ENCODE measurements at regions of chr20 and their contacts with region 1.

Region 1: DNA sequence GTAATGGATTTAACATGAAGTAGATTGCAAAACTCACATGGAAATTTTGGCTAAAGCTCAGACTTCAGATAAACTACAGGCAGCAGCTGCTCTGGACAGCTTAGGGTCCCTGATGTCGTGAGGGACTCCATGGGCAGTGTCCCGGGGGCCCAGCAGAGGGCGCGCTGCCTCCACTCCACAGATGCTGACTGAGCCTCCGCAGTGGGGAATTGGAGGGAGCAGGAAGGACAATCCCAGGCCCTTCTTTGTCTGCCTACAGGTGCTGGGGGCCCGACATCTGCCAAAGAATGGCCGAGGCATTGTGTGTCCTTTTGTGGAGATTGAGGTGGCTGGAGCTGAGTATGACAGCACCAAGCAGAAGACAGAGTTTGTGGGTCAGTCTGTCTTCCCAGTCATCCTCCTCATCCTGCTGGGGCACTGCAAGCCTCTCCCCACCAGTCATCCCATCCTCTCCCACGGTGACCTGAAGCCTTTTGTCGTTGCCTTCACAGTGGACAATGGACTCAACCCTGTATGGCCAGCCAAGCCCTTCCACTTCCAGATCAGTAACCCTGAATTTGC is 35.9 kb downstream of the PLCG1 start:
- DNase-seq: peak; percentile 60 to 81
- ATAC-seq: peak; percentile 89 to 95
- H3K4me3 ChIP-seq: no peak overlapping the region
- H3K27ac ChIP-seq: no peak overlapping the region
- H3K4me1 ChIP-seq: peaks cover 11% of the 10 kb centered on the region; the same call in 2 of the 3 replicates
- CTCF ChIP-seq: peak; percentile 85
- EP300 ChIP-seq: no peak
- POLR2A ChIP-seq: no peak
- RAD21 ChIP-seq: peak; percentile 89 to 93

Region 2: GRCh38 chr20:40931410-40932044 is 241.7 kb before region 1 on chr20:
- CTCF ChIA-PET with region 1: no interaction called
- POLR2A ChIA-PET with region 1: no interaction called
- DNase-seq: no peak
- ATAC-seq: no peak
- H3K4me3 ChIP-seq: no peak overlapping the region
- H3K27ac ChIP-seq: no peak overlapping the region
- H3K4me1 ChIP-seq: no peaks in the 10 kb centered on the region
- CTCF ChIP-seq: no peak
- EP300 ChIP-seq: no peak
- POLR2A ChIP-seq: no peak
- RAD21 ChIP-seq: no peak

Region 3: DNA sequence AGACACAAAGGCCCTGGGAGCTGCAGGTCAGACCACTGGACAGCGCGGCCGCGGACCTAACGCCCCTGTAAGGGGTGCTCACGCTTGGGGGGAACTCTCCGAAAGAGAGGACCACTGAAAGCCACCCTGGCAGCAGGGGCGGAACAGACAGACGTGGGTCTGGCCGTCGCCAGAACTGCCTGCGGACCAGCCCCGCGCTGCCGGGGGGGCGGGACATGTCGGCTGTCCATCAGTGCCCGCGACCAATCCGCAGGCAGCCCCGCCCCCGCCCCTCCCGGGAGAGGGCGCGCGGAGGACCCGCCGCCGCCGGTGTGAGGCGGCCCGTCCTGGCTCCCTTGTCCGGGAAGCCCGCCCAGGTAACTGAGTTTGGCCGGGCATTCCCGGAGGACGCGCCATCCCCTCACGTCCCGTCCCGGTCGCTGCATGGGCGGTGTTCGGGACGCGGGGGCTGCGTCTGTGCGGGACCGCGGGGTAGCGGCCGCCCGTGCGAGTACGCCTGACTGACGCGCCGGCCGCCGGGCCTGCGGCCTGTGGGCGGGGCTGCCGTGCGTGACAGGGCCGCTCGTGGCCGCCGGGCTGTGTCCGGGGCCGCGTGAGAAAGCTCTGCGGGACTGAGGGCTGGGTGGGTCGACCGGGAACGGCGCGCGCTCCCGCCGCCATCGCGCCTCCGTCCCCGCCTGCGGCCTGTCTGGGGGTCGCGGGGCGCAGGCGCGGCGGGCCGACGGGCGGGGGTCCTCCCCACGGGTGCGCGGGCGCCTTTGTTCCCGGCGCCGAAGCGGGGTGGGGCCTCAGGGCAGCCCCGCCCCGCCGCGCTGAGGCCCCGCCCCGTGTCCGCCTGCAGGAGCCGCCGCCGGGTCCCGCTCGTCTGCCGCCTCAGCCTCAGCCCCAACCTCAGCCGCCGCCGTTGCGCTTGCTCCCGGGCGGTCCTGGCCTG is 36.3 kb before region 1 on chr20 and contains the start of gene PLCG1:
- CTCF ChIA-PET with region 1: interaction called, 16 read pairs
- POLR2A ChIA-PET with region 1: interaction called, 3 read pairs
- DNase-seq: peak; percentile 83 to 91
- ATAC-seq: peak; percentile 77 to 86
- H3K4me3 ChIP-seq: peak within 1 kb of the TSS; percentile 89
- H3K27ac ChIP-seq: peak within 1 kb of the TSS; percentile 86 to 91
- H3K4me1 ChIP-seq: peaks cover 7% of the 10 kb centered on the region
- CTCF ChIP-seq: no peak
- EP300 ChIP-seq: no peak
- POLR2A ChIP-seq: peak; percentile 57
- RAD21 ChIP-seq: no peak
- polyA plus RNA-seq, gene PLCG1: 22.0 and 37.1 TPM in 2 replicates

Region 4: GRCh38 chr20:41161886-41162285 is 11.4 kb before region 1 on chr20:
- CTCF ChIA-PET with region 1: interaction called, 43 read pairs
- POLR2A ChIA-PET with region 1: no interaction called
- DNase-seq: no peak
- ATAC-seq: 0 out of 6 replicates have a peak, but pooled peaks of 1 of the 2 experiments have one; percentile 28
- H3K4me3 ChIP-seq: no peak overlapping the region
- H3K27ac ChIP-seq: no peak overlapping the region
- H3K4me1 ChIP-seq: no peaks in the 10 kb centered on the region
- CTCF ChIP-seq: no peak
- EP300 ChIP-seq: no peak
- POLR2A ChIP-seq: no peak
- RAD21 ChIP-seq: no peak

Region 5: GRCh38 chr20:41205313-41205712 is 32.1 kb after region 1 on chr20:
- CTCF ChIA-PET with region 1: interaction called, 16 read pairs
- POLR2A ChIA-PET with region 1: no interaction called
- DNase-seq: no peak
- ATAC-seq: no peak
- H3K4me3 ChIP-seq: no peak overlapping the region
- H3K27ac ChIP-seq: no peak overlapping the region
- H3K4me1 ChIP-seq: no peaks in the 10 kb centered on the region
- CTCF ChIP-seq: no peak
- EP300 ChIP-seq: no peak
- POLR2A ChIP-seq: no peak
- RAD21 ChIP-seq: no peak

Region 6: DNA sequence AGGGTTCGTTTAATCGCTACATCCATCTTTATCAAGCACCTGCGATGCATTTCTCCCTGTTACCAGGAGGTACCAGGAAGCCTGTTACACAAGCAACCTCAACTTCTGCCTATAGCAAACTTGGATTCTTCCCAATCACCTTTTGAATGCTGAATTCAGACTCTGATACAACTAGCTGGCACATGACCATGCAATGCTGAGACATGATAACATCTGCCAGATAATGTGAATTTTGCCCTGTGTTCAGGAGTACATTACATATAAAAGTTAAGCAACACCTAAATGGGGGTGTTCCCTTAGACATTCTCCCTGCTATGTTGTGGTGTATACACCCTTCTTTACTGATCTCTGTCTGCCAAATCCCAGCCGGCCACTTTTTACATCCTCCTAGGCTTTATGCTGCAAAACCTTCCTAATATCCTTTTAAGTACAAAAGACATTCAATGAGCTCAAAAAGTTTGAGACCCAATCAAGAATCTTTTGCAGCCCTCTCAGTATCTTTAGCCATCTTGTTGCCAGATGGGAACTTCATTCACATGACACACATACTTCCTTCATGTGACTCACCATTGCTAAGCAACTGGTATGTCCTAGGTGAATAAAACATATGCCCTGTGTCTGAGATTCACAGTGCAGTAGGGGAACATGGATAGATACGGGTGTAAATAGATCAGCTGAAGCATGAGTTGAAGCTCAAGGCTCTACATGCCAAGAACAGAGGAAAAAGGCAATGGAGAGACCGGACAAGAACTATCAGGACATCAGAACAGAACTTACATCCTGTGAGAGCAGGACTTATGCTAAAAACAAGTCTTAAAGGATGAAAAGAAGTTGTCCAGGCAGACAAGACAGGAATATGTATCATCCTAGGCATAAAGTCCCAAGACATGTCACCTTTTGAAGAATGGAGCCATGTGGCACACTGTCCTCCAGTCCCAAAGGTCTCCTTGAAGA is 60.0 kb after region 1 on chr20:
- CTCF ChIA-PET with region 1: interaction called, 48 read pairs
- POLR2A ChIA-PET with region 1: no interaction called
- DNase-seq: peak; percentile 10 to 31
- ATAC-seq: peak; percentile 71 to 86; a peak in 5 of 6 replicates
- H3K4me3 ChIP-seq: peak overlapping the region; percentile 42
- H3K27ac ChIP-seq: peak overlapping the region; percentile 56 to 64; a peak in 3 of 6 replicates
- H3K4me1 ChIP-seq: peaks cover 12% of the 10 kb centered on the region
- CTCF ChIP-seq: no peak
- EP300 ChIP-seq: no peak
- POLR2A ChIP-seq: no peak
- RAD21 ChIP-seq: no peak

Region 7: GRCh38 chr20:41317536-41318270 is 144.5 kb after region 1 on chr20 and contains the start of gene ZHX3:
- CTCF ChIA-PET with region 1: interaction called, 12 read pairs
- POLR2A ChIA-PET with region 1: no interaction called
- DNase-seq: peak; percentile 90 to 94
- ATAC-seq: peak; percentile 94 to 99
- H3K4me3 ChIP-seq: peak within 1 kb of the TSS; percentile 73
- H3K27ac ChIP-seq: peak within 1 kb of the TSS; percentile 74 to 87
- H3K4me1 ChIP-seq: peaks cover 20% of the 10 kb centered on the region; the same call in 2 of the 3 replicates
- CTCF ChIP-seq: no peak
- EP300 ChIP-seq: no peak
- POLR2A ChIP-seq: peak; percentile 84
- RAD21 ChIP-seq: no peak
- polyA plus RNA-seq, gene ZHX3: 3.6 and 5.5 TPM in 2 replicates

Region 8: GRCh38 chr20:41339507-41340326 is 166.5 kb after region 1 on chr20:
- CTCF ChIA-PET with region 1: interaction called, 248 read pairs
- POLR2A ChIA-PET with region 1: no interaction called
- DNase-seq: peak; percentile 77
- ATAC-seq: peak; percentile 79 to 88
- H3K4me3 ChIP-seq: peak overlapping the region; percentile 66
- H3K27ac ChIP-seq: peak overlapping the region; percentile 45 to 94; a peak in 5 of 6 replicates
- H3K4me1 ChIP-seq: peaks cover 11% of the 10 kb centered on the region; the same call in 2 of the 3 replicates
- CTCF ChIP-seq: peak; percentile 95
- EP300 ChIP-seq: no peak
- POLR2A ChIP-seq: no peak
- RAD21 ChIP-seq: peak; percentile 97 to 99